ENCODE measurements at regions of chr7 and their contacts with region 1.

Region 1: GRCh38 chr7:99112097-99112496 is 31.8 kb downstream of the SMURF1 start:
- DNase-seq: no peak
- H3K4me3 ChIP-seq: no peak overlapping the region
- H3K4me3 Mint-ChIP-seq: no peak overlapping the region
- H3K27ac ChIP-seq: no peak overlapping the region
- H3K27ac Mint-ChIP-seq: no peak overlapping the region
- H3K4me1 ChIP-seq: peaks cover 10 to 22% of the 10 kb centered on the region in 2 donors
- H3K4me1 Mint-ChIP-seq: peaks cover 51% of the 10 kb centered on the region
- H3K27me3 ChIP-seq: no peaks in the 10 kb centered on the region
- H3K27me3 Mint-ChIP-seq: no peaks in the 10 kb centered on the region
- CTCF ChIP-seq: no peak

Region 2: GRCh38 chr7:98996150-98996552 is 115.9 kb before region 1 on chr7:
- intact Hi-C with region 1: no loop called
- DNase-seq: no peak
- H3K4me3 ChIP-seq: no peak overlapping the region
- H3K4me3 Mint-ChIP-seq: no peak overlapping the region
- H3K27ac ChIP-seq: no peak overlapping the region
- H3K27ac Mint-ChIP-seq: peak overlapping the region in 1 of 7 donors; percentile 4
- H3K4me1 ChIP-seq: no peaks in the 10 kb centered on the region
- H3K4me1 Mint-ChIP-seq: no peaks in the 10 kb centered on the region
- H3K27me3 ChIP-seq: no peaks in the 10 kb centered on the region
- H3K27me3 Mint-ChIP-seq: peaks cover 0 to 2% (median 0%) of the 10 kb centered on the region in 3 donors
- CTCF ChIP-seq: no peak

Region 3: GRCh38 chr7:99167072-99167471 is 55.0 kb after region 1 on chr7:
- intact Hi-C with region 1: loop called in 1 of 2 experiments (anchors 10 kb)
- DNase-seq: no peak
- H3K4me3 ChIP-seq: no peak overlapping the region
- H3K4me3 Mint-ChIP-seq: no peak overlapping the region
- H3K27ac ChIP-seq: no peak overlapping the region
- H3K27ac Mint-ChIP-seq: no peak overlapping the region
- H3K4me1 ChIP-seq: no peaks in the 10 kb centered on the region
- H3K4me1 Mint-ChIP-seq: peaks cover 2% of the 10 kb centered on the region
- H3K27me3 ChIP-seq: no peaks in the 10 kb centered on the region
- H3K27me3 Mint-ChIP-seq: peaks cover 5 to 18% (median 9%) of the 10 kb centered on the region in 3 donors
- CTCF ChIP-seq: no peak

Measured in CD14-positive monocyte (primary cell).